K562 (cell line): ENCODE measurements at regions of chr11 and their contacts with region 1.

Region 1: DNA sequence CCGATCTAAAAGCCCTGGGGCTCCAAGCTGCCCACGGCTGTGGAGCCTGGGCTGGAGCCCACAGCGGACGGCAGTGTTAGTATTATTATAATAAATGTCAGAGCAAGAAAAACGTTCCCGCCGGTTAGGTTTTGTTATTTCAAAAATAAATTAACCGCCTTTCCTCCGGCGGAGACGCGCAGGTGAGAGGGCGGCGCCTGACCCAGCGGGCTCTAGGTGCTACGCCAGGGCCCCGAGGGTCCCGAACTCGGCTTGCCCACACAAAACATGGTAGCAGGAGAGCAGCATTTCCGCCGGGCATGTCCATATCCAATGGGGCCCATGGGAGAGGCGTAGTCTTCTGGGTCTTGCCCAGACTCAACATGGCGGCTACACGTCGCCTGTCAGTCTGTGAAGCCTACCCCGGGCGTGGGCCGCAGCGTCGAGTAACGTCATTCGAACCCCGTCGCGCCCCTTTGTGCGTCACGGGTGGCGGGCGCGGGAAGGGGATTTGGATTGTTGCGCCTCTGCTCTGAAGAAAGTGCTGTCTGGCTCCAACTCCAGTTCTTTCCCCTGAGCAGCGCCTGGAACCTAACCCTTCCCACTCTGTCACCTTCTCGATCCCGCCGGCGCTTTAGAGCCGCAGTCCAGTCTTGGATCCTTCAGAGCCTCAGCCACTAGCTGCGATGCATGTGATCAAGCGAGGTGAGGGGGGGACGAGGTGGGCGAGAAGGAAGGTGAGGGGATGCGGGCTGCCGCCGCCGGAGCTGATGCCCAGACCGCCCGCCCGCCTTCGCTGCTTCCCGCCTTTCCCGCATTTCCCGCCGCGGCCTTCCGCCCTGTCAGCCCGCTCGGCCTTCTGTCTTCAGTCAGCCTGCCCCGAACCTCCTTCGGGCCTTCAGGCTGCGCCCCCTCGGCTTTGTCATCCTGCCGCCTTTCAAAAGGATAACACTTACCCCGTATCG is at the start of gene RRM1:
- DNase-seq: peak; percentile 90 to 97 (median 92)
- ATAC-seq: peak; percentile 97
- H3K4me3 ChIP-seq: peak within 1 kb of the TSS; percentile 64
- H3K27ac ChIP-seq: peak within 1 kb of the TSS; percentile 99
- H3K4me1 ChIP-seq: peaks cover 20 to 31% of the 10 kb centered on the region in 2 experiments; a peak in 4 of 5 replicates
- H3K27me3 ChIP-seq: no peaks in the 10 kb centered on the region
- CTCF ChIP-seq: no peak
- EP300 ChIP-seq: peak; percentile 23; the same call in 1 of the 2 replicates
- POLR2A ChIP-seq: peak; percentile 84
- RAD21 ChIP-seq: no peak
- polyA plus RNA-seq, gene RRM1: 154 to 270 TPM

Region 2: GRCh38 chr11:4084406-4085125 is 10.1 kb before region 1 on chr11:
- CTCF ChIA-PET with region 1: no interaction called
- POLR2A ChIA-PET with region 1: interaction called, 12 read pairs
- in situ Hi-C with region 1: no loop called
- intact Hi-C with region 1: no loop called
- DNase-seq: no peak
- ATAC-seq: no peak
- H3K4me3 ChIP-seq: no peak overlapping the region
- H3K27ac ChIP-seq: no peak overlapping the region
- H3K4me1 ChIP-seq: peaks cover 0 to 4% of the 10 kb centered on the region in 2 experiments; a peak in 2 of 5 replicates
- H3K27me3 ChIP-seq: no peaks in the 10 kb centered on the region
- CTCF ChIP-seq: no peak
- EP300 ChIP-seq: no peak
- POLR2A ChIP-seq: no peak
- RAD21 ChIP-seq: no peak